IMR-90 (cell line): ENCODE measurements at regions of chr12 and their contacts with region 1.

Region 1: GRCh38 chr12:93813972-93814821 is 137.0 kb downstream of the CRADD start:
- DNase-seq: peak; percentile 94
- ATAC-seq: peak; percentile 74
- H3K4me3 ChIP-seq: no peak overlapping the region
- H3K27ac ChIP-seq: peak overlapping the region; percentile 63
- H3K4me1 ChIP-seq: peaks cover 24% of the 10 kb centered on the region
- H3K27me3 ChIP-seq: no peaks in the 10 kb centered on the region
- CTCF ChIP-seq: no peak
- POLR2A ChIP-seq: no peak
- RAD21 ChIP-seq: no peak

Region 2: GRCh38 chr12:93778306-93778705 is 35.9 kb before region 1 on chr12:
- CTCF ChIA-PET with region 1: no interaction called
- POLR2A ChIA-PET with region 1: no interaction called
- dilution Hi-C with region 1: no loop called
- in situ Hi-C with region 1: no loop called
- intact Hi-C with region 1: loop called (anchors 5 kb)
- DNase-seq: peak; percentile 88
- ATAC-seq: peak; percentile 67
- H3K4me3 ChIP-seq: no peak overlapping the region
- H3K27ac ChIP-seq: peak overlapping the region; percentile 92; the same call in 1 of the 2 replicates
- H3K4me1 ChIP-seq: peaks cover 18% of the 10 kb centered on the region
- H3K27me3 ChIP-seq: no peaks in the 10 kb centered on the region
- CTCF ChIP-seq: no peak
- POLR2A ChIP-seq: no peak
- RAD21 ChIP-seq: no peak

Region 3: DNA sequence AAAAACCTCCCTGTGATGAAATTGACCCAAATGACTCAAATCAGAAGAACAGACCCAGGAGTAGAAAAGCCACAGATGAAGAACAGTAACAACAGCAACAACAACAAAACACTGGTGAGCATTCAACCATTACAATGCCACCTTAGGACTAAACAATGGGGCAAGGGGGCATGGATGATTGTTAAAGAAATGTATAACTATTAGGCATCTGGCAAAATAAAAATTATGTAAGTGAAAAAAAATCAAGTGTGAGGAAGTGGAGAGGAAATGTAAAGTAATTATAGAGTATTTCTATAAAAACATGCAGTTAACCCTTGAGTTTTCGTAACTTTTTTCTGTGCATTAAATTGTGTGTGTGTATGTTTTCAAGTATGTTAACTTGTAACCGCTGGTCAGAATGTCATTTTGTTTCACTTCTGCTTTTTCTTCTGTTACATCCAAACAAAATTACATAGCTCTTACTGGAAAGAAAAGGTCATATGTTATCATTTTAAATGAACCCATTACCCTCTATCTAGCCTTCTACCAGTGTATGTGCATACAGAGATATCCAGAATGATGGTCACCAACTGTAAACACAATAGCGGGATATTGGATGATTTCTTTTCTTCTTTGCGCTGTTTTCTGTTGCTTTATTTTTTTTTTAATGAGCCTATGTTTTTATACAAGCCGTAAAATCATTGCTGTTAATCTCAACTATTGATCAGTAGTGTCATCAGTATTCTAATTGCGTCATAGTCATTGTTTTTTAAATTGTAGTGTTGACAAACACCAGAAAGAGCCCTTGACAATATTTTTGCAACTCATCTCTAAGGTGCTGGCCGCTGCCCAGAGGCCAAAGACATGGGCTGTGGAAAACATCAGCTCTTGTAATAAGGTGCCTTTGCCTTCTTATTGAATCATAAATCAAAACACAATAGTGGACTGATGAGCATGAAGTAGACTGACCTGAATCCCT is 33.6 kb after region 1 on chr12:
- CTCF ChIA-PET with region 1: no interaction called
- POLR2A ChIA-PET with region 1: no interaction called
- dilution Hi-C with region 1: no loop called
- in situ Hi-C with region 1: no loop called
- intact Hi-C with region 1: no loop called
- DNase-seq: no peak
- ATAC-seq: no peak
- H3K4me3 ChIP-seq: no peak overlapping the region
- H3K27ac ChIP-seq: no peak overlapping the region
- H3K4me1 ChIP-seq: no peaks in the 10 kb centered on the region
- H3K27me3 ChIP-seq: no peaks in the 10 kb centered on the region
- CTCF ChIP-seq: no peak
- POLR2A ChIP-seq: no peak
- RAD21 ChIP-seq: no peak